Activated CD8-positive, alpha-beta T cell treated with anti-CD3 and anti-CD28 coated beads for 36 hours (primary cell): ENCODE measurements at regions of chr17 and their contacts with region 1.

Region 1: GRCh38 chr17:70636517-70637133 is 467.3 kb downstream of the KCNJ2 start:
- DNase-seq: peak; percentile 11
- ATAC-seq: peak; percentile 45
- H3K4me3 Mint-ChIP-seq: no peak overlapping the region
- H3K27ac Mint-ChIP-seq: no peak overlapping the region
- H3K4me1 Mint-ChIP-seq: no peaks in the 10 kb centered on the region
- H3K27me3 Mint-ChIP-seq: peaks cover 2% of the 10 kb centered on the region
- CTCF ChIP-seq: peak; percentile 88

Region 2: DNA sequence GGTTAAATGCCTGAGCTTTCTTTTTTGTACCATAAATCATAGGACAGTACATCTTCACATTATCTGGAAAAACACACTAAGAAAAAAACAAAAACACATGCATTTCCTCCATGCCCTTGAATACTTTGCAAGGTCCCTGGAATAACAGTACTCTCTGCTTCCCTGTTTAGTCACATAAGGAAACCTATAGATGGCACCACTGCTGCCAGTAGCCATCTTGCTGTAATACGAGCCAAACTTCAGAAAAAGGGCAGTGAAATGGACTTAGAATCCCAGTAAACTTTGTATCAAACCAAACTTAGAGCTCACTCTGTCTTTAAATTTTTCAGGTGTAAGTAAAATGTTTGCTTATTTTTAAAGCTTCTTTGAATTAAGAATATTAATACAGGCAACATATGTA is 31.8 kb before region 1 on chr17:
- CTCF ChIA-PET with region 1: no interaction called
- POLR2A ChIA-PET with region 1: no interaction called
- intact Hi-C with region 1: no loop called
- DNase-seq: no peak
- ATAC-seq: no peak
- H3K4me3 Mint-ChIP-seq: no peak overlapping the region
- H3K27ac Mint-ChIP-seq: no peak overlapping the region
- H3K4me1 Mint-ChIP-seq: no peaks in the 10 kb centered on the region
- H3K27me3 Mint-ChIP-seq: peaks cover 4% of the 10 kb centered on the region
- CTCF ChIP-seq: no peak

Region 3: GRCh38 chr17:70709596-70709995 is 73.0 kb after region 1 on chr17:
- CTCF ChIA-PET with region 1: no interaction called
- POLR2A ChIA-PET with region 1: no interaction called
- intact Hi-C with region 1: no loop called
- DNase-seq: no peak
- ATAC-seq: no peak
- H3K4me3 Mint-ChIP-seq: no peak overlapping the region
- H3K27ac Mint-ChIP-seq: no peak overlapping the region
- H3K4me1 Mint-ChIP-seq: no peaks in the 10 kb centered on the region
- H3K27me3 Mint-ChIP-seq: peaks cover 1% of the 10 kb centered on the region
- CTCF ChIP-seq: no peak

Region 4: GRCh38 chr17:72539981-72540897 is 1903.6 kb after region 1 on chr17:
- CTCF ChIA-PET with region 1: interaction called, 3 read pairs
- POLR2A ChIA-PET with region 1: no interaction called
- intact Hi-C with region 1: loop called (anchors 10 kb)
- DNase-seq: peak; percentile 54
- ATAC-seq: peak; percentile 82
- H3K4me3 Mint-ChIP-seq: no peak overlapping the region
- H3K27ac Mint-ChIP-seq: no peak overlapping the region
- H3K4me1 Mint-ChIP-seq: peaks cover 5% of the 10 kb centered on the region
- H3K27me3 Mint-ChIP-seq: peaks cover 29% of the 10 kb centered on the region
- CTCF ChIP-seq: peak; percentile 78